ENCODE measurements at regions of chr1 and their contacts with region 1.

Region 1: GRCh38 chr1:19096036-19096833 is 113.8 kb downstream of the UBR4 start:
- DNase-seq: no peak
- H3K4me3 ChIP-seq: no peak overlapping the region
- H3K27ac ChIP-seq: no peak overlapping the region
- H3K4me1 ChIP-seq: peaks cover 6% of the 10 kb centered on the region
- H3K27me3 ChIP-seq: no peaks in the 10 kb centered on the region
- CTCF ChIP-seq: peak in 1 of 3 experiments; percentile 25
- POLR2A ChIP-seq: no peak

Region 2: GRCh38 chr1:18902523-18903290 is 193.5 kb before region 1 on chr1 and contains the start of gene ALDH4A1:
- intact Hi-C with region 1: loop called (anchors 10 kb)
- DNase-seq: peak; percentile 98
- H3K4me3 ChIP-seq: peak within 1 kb of the TSS; percentile 66 to 72
- H3K27ac ChIP-seq: peak within 1 kb of the TSS; percentile 56 to 88
- H3K4me1 ChIP-seq: peaks cover 7% of the 10 kb centered on the region
- H3K27me3 ChIP-seq: no peaks in the 10 kb centered on the region
- CTCF ChIP-seq: peak in 2 of 3 experiments; percentile 24 to 31
- POLR2A ChIP-seq: no peak
- total RNA-seq, gene ALDH4A1: 9.6 to 10.6 TPM

Region 3: DNA sequence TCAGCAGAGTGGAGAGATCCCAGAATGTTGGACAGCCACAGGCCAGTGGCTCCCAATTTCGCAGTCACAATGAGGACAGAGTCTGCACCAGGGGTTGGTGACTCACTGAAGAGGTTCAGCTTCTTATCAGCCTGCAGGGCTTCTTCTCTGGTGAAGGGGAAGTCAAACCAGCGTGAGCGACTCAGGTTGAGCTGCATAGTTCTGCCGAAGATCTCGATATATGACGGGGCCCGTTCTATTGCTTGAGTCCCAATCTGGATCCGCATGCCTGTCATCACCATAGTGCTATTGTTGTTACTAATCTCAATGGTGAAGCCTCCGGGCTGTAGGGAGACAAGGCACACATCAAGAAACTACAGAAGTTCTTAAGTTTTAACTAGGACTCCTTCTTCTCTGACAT is 55.3 kb after region 1 on chr1:
- intact Hi-C with region 1: no loop called
- DNase-seq: no peak
- H3K4me3 ChIP-seq: no peak overlapping the region
- H3K27ac ChIP-seq: no peak overlapping the region
- H3K4me1 ChIP-seq: no peaks in the 10 kb centered on the region
- H3K27me3 ChIP-seq: no peaks in the 10 kb centered on the region
- CTCF ChIP-seq: no peak
- POLR2A ChIP-seq: no peak

Region 4: GRCh38 chr1:19232526-19232851 is 136.3 kb after region 1 on chr1:
- intact Hi-C with region 1: no loop called
- DNase-seq: peak; percentile 82
- H3K4me3 ChIP-seq: no peak overlapping the region
- H3K27ac ChIP-seq: peak overlapping the region; percentile 42 to 73
- H3K4me1 ChIP-seq: peaks cover 21% of the 10 kb centered on the region
- H3K27me3 ChIP-seq: no peaks in the 10 kb centered on the region
- CTCF ChIP-seq: peak in 2 of 3 experiments; percentile 10 to 36
- POLR2A ChIP-seq: no peak

Measured in testis (tissue), 5 donors.